Naive thymus-derived CD8-positive, alpha-beta T cell (primary cell): ENCODE measurements at regions of chr6 and their contacts with region 1.

Region 1: DNA sequence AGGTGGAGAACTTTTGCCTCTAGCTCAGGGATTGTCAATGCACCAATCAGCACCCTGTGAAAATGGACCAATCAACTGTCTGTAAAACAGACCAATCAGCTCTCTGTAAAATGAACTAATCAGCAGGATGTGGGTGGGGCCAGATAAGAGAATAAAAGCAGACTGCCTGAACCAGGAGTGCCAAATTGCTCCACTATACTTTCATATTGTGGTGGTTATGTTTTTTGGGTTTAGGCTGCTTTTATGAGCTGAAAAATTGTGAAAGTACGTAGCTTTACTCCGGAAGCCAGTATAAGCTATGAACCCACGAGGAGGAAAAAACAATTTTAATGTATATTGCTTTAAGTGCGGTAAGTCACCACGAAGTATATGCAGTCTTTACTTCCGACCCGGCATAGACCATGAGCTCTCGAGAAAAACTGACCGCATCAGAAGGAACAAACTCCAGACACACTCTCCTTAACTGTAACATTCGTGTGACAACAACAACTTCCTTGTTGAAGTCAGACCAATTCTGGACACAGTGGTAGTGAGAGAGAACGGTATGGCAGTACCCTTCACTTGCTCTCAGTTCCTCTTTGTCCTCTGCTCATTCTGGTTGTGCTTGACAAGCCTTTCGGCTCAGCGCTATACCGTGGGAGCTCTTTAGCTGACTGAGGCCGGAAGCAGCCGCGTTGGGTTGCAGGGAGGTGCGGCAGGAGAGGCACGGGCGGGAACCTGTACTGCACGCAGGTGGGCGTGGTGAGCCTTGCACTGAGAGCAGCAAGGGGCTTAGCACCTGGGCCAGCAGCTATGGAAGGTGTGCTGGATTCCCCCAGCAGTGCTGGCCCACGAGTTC is 81.9 kb upstream of the E2F3 start:
- DNase-seq: peak; percentile 60 to 92 (median 83)
- ATAC-seq: peak; percentile 90 to 92
- H3K4me3 Mint-ChIP-seq: peak overlapping the region; percentile 83 to 95 (median 92)
- H3K27ac Mint-ChIP-seq: peak overlapping the region; percentile 76 to 99 (median 98)
- H3K4me1 Mint-ChIP-seq: peaks cover 7 to 25% (median 18%) of the 10 kb centered on the region in 4 donors
- H3K27me3 Mint-ChIP-seq: no peaks in the 10 kb centered on the region

Region 2: GRCh38 chr6:20302702-20303251 is 17.0 kb before region 1 on chr6:
- POLR2A ChIA-PET with region 1: interaction called, 12 read pairs
- DNase-seq: no peak
- ATAC-seq: no peak
- H3K4me3 Mint-ChIP-seq: no peak overlapping the region
- H3K27ac Mint-ChIP-seq: no peak overlapping the region
- H3K4me1 Mint-ChIP-seq: no peaks in the 10 kb centered on the region
- H3K27me3 Mint-ChIP-seq: peaks cover 0 to 3% (median 0%) of the 10 kb centered on the region in 5 donors

Region 3: GRCh38 chr6:20340068-20340848 is 20.5 kb after region 1 on chr6:
- POLR2A ChIA-PET with region 1: interaction called, 28 read pairs
- DNase-seq: no peak
- ATAC-seq: no peak
- H3K4me3 Mint-ChIP-seq: no peak overlapping the region
- H3K27ac Mint-ChIP-seq: peak overlapping the region in 1 of 10 donors; percentile 66
- H3K4me1 Mint-ChIP-seq: peaks cover 26 to 31% (median 28%) of the 10 kb centered on the region in 4 donors
- H3K27me3 Mint-ChIP-seq: no peaks in the 10 kb centered on the region

Region 4: DNA sequence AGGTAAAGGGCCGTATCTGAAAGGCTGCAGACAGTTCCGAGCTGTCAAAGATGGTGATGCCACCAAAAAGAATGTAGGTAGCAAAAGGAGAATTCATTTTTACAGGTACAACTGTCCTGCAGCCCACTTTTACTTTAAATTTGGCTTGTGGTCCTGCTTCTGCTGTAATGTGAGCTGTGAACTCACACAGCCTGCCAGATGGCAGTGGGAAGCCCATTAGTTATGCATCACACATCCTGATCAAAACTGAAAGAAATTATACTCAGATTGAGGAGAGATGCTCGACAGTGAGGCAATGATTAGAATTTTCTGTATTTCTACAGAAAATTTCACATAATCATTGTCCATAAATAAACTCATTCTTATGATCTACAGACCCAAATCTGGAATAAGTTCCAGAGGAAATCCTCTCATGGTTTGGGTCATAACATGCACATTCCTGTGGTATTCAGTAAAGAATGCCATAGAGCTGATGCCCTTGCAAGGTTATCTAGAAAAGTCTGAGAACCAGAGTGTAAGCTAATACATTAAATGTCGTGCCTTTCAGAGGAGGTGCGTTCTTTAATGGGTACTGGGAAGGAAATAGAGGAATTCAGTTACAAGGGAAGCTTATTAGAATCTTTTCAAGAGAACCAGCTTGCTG is 58.0 kb after region 1 on chr6:
- POLR2A ChIA-PET with region 1: interaction called, 311 read pairs
- DNase-seq: no peak
- ATAC-seq: no peak
- H3K4me3 Mint-ChIP-seq: no peak overlapping the region
- H3K27ac Mint-ChIP-seq: peak overlapping the region in 2 of 10 donors; percentile 29 to 63
- H3K4me1 Mint-ChIP-seq: peaks cover 6 to 29% (median 12%) of the 10 kb centered on the region in 4 donors
- H3K27me3 Mint-ChIP-seq: no peaks in the 10 kb centered on the region

Region 5: GRCh38 chr6:20401205-20402091 is 81.7 kb after region 1 on chr6 and contains the start of gene E2F3:
- POLR2A ChIA-PET with region 1: interaction called, 171 read pairs
- DNase-seq: peak; percentile 91 to 100 (median 99)
- ATAC-seq: peak; percentile 85 to 89
- H3K4me3 Mint-ChIP-seq: peak within 1 kb of the TSS; percentile 88 to 98 (median 95)
- H3K27ac Mint-ChIP-seq: peak within 1 kb of the TSS; percentile 66 to 96 (median 87)
- H3K4me1 Mint-ChIP-seq: peaks cover 16 to 40% (median 30%) of the 10 kb centered on the region in 4 donors
- H3K27me3 Mint-ChIP-seq: no peaks in the 10 kb centered on the region
- polyA plus RNA-seq, gene E2F3: 4.9 to 8.0 (median 5.9) TPM

Region 6: GRCh38 chr6:20534295-20535262 is 214.8 kb after region 1 on chr6 and contains the start of gene CDKAL1:
- POLR2A ChIA-PET with region 1: interaction called, 10 read pairs
- DNase-seq: peak; percentile 72 to 95 (median 87)
- ATAC-seq: peak; percentile 87 to 98
- H3K4me3 Mint-ChIP-seq: peak within 1 kb of the TSS; percentile 94 to 99 (median 96)
- H3K27ac Mint-ChIP-seq: peak within 1 kb of the TSS; percentile 98 to 100 (median 99)
- H3K4me1 Mint-ChIP-seq: peaks cover 24 to 43% (median 39%) of the 10 kb centered on the region in 4 donors
- H3K27me3 Mint-ChIP-seq: peaks cover 0 to 4% (median 0%) of the 10 kb centered on the region in 5 donors
- polyA plus RNA-seq, gene CDKAL1: 29.1 to 36.7 (median 31.6) TPM